B cell (primary cell): ENCODE measurements at regions of chr16 and their contacts with region 1.

Region 1: DNA sequence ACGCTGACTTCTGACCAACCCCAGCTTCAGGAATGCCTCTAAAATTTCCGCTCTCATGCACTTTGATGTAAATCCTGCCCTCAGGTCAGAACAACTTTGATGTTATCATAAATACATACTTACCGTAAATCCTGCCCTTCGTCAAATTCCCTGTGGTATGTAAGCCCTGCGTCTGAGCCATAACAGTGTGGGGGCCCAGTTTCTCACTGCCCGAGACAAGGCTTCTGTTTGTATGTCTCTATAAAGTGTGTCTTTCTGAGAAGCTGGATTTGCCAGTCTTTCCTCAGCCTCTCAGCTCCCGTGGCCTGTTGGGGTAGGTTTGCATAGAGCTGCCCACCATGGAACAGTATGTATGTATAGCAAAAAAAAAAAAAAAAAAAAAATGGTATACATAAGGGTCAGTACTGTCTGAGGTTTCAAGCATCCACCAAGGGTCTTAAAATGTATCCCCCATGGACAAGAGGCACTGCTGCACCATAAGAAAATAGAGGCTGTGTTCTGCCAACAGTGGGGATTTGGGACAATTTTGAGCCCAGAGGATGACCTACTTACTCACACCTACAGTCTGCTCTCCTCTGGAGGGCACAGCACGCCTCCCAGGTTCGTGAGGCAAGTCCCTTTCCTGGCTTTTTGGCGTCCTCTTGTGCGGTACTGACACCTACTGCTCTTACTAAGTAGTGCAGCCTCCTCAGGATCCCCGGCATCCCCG is 17.5 kb downstream of the PRMT7 start:
- DNase-seq: peak; percentile 86
- ATAC-seq: peak; percentile 99
- H3K4me3 ChIP-seq: no peak overlapping the region
- H3K4me3 Mint-ChIP-seq: no peak overlapping the region
- H3K27ac ChIP-seq: no peak overlapping the region
- H3K27ac Mint-ChIP-seq: no peak overlapping the region
- H3K4me1 ChIP-seq: peaks cover 11 to 16% of the 10 kb centered on the region in 2 donors
- H3K4me1 Mint-ChIP-seq: peaks cover 14% of the 10 kb centered on the region
- H3K27me3 ChIP-seq: no peaks in the 10 kb centered on the region
- H3K27me3 Mint-ChIP-seq: no peaks in the 10 kb centered on the region
- CTCF ChIP-seq: peak; percentile 96

Region 2: GRCh38 chr16:68237243-68238028 is 90.9 kb before region 1 on chr16:
- CTCF ChIA-PET with region 1: interaction called, 109 read pairs
- POLR2A ChIA-PET with region 1: no interaction called
- intact Hi-C with region 1: loop called (anchors 1 kb)
- DNase-seq: peak; percentile 88
- ATAC-seq: peak; percentile 81
- H3K4me3 ChIP-seq: peak overlapping the region; percentile 58 to 76 (median 68)
- H3K4me3 Mint-ChIP-seq: peak overlapping the region; percentile 98
- H3K27ac ChIP-seq: no peak overlapping the region
- H3K27ac Mint-ChIP-seq: peak overlapping the region; percentile 83
- H3K4me1 ChIP-seq: peaks cover 22 to 42% of the 10 kb centered on the region in 2 donors
- H3K4me1 Mint-ChIP-seq: peaks cover 39% of the 10 kb centered on the region
- H3K27me3 ChIP-seq: no peaks in the 10 kb centered on the region
- H3K27me3 Mint-ChIP-seq: no peaks in the 10 kb centered on the region
- CTCF ChIP-seq: no peak

Region 3: GRCh38 chr16:68244903-68245853 is 83.1 kb before region 1 on chr16 and contains the start of gene PLA2G15:
- CTCF ChIA-PET with region 1: interaction called, 109 read pairs
- POLR2A ChIA-PET with region 1: interaction called, 4 read pairs
- intact Hi-C with region 1: no loop called
- DNase-seq: peak; percentile 97
- ATAC-seq: peak; percentile 98
- H3K4me3 ChIP-seq: peak within 1 kb of the TSS; percentile 78 to 97 (median 96)
- H3K4me3 Mint-ChIP-seq: peak within 1 kb of the TSS; percentile 97
- H3K27ac ChIP-seq: peak within 1 kb of the TSS; percentile 12 to 28
- H3K27ac Mint-ChIP-seq: peak within 1 kb of the TSS; percentile 50
- H3K4me1 ChIP-seq: peaks cover 25 to 33% of the 10 kb centered on the region in 2 donors
- H3K4me1 Mint-ChIP-seq: peaks cover 32% of the 10 kb centered on the region
- H3K27me3 ChIP-seq: no peaks in the 10 kb centered on the region
- H3K27me3 Mint-ChIP-seq: no peaks in the 10 kb centered on the region
- CTCF ChIP-seq: no peak
- total RNA-seq, gene PLA2G15: 10.8 and 12.5 TPM in 2 replicates

Region 4: GRCh38 chr16:68310761-68311511 is 17.4 kb before region 1 on chr16 and contains the starts of genes PRMT7 and SLC7A6OS:
- CTCF ChIA-PET with region 1: interaction called, 37 read pairs
- POLR2A ChIA-PET with region 1: no interaction called
- intact Hi-C with region 1: loop called (anchors 1 kb)
- DNase-seq: peak; percentile 94
- ATAC-seq: peak; percentile 99
- H3K4me3 ChIP-seq: peak within 1 kb of the TSS; percentile 76 to 96 (median 94)
- H3K4me3 Mint-ChIP-seq: peak within 1 kb of the TSS; percentile 98
- H3K27ac ChIP-seq: peak within 1 kb of the TSS; percentile 59 to 76
- H3K27ac Mint-ChIP-seq: peak within 1 kb of the TSS; percentile 96
- H3K4me1 ChIP-seq: peaks cover 20 to 24% of the 10 kb centered on the region in 2 donors
- H3K4me1 Mint-ChIP-seq: peaks cover 37% of the 10 kb centered on the region
- H3K27me3 ChIP-seq: no peaks in the 10 kb centered on the region
- H3K27me3 Mint-ChIP-seq: no peaks in the 10 kb centered on the region
- CTCF ChIP-seq: peak; percentile 36
- total RNA-seq, gene PRMT7: 76.9 and 79.0 TPM in 2 replicates
- total RNA-seq, gene SLC7A6OS: 52.0 and 54.1 TPM in 2 replicates

Region 5: GRCh38 chr16:68338326-68339119 is 10.2 kb after region 1 on chr16:
- CTCF ChIA-PET with region 1: interaction called, 16 read pairs
- POLR2A ChIA-PET with region 1: no interaction called
- intact Hi-C with region 1: no loop called
- DNase-seq: no peak
- ATAC-seq: no peak
- H3K4me3 ChIP-seq: no peak overlapping the region
- H3K4me3 Mint-ChIP-seq: no peak overlapping the region
- H3K27ac ChIP-seq: no peak overlapping the region
- H3K27ac Mint-ChIP-seq: no peak overlapping the region
- H3K4me1 ChIP-seq: no peaks in the 10 kb centered on the region
- H3K4me1 Mint-ChIP-seq: no peaks in the 10 kb centered on the region
- H3K27me3 ChIP-seq: no peaks in the 10 kb centered on the region
- H3K27me3 Mint-ChIP-seq: no peaks in the 10 kb centered on the region
- CTCF ChIP-seq: no peak

Region 6: DNA sequence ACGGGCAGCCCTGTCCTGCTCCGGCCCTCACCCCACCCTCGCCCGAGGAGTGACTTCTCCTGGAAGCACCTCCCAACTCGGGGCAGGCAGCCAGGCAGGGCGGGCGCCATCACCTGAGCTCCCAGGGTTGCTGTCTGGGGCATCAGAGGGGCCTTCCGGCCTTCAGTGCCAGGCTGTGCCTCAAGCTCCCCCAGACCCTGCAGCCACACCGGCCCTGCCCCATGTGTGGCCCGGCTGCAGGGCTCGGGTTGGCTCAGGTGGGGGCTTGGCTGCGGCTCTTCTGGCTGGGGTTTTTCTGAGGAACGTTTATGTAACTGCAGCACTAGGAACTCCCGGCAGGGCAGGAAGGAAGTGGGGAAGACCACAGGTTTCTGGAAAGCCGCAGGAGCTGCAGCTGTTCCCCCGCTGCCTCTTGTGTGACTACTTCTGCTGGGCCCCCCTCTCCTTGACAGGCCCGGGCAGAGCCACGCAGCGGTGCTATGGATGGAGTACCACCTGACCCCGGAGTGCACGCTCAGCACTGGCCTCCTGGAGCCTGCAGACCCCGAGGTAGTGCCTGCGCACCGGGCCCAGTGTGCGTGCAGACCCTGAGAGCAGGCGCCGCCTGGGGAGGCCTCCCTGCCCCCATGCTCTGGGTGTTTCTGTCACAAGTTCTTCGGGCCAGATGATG is 28.1 kb after region 1 on chr16:
- CTCF ChIA-PET with region 1: no interaction called
- POLR2A ChIA-PET with region 1: no interaction called
- intact Hi-C with region 1: no loop called
- DNase-seq: peak; percentile 49
- ATAC-seq: peak; percentile 60
- H3K4me3 ChIP-seq: no peak overlapping the region
- H3K4me3 Mint-ChIP-seq: peak overlapping the region; percentile 47
- H3K27ac ChIP-seq: no peak overlapping the region
- H3K27ac Mint-ChIP-seq: no peak overlapping the region
- H3K4me1 ChIP-seq: peaks cover 15 to 18% of the 10 kb centered on the region in 2 donors
- H3K4me1 Mint-ChIP-seq: peaks cover 18% of the 10 kb centered on the region
- H3K27me3 ChIP-seq: no peaks in the 10 kb centered on the region
- H3K27me3 Mint-ChIP-seq: no peaks in the 10 kb centered on the region
- CTCF ChIP-seq: no peak